GM10248 (cell line): ENCODE measurements at regions of chr6 and their contacts with region 1.

Region 1: DNA sequence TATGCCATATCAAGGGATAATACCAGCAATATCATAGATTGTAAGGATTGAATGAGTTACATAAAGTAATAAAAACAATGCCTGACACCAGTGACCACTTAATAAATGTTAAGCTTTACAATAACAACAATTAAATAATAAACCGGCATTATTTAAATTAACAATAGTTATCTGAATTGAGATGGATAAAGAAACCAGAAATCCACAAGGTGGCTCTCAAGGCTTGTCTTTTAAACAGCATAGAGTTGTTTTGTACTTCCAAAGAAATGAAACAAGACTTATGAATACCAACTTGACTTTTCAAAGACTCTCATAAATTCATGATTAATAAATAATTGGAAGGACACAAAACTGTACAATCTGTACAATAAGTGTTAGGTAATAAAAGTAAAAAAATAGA is 203.1 kb downstream of the ASCC3 start:
- DNase-seq: no peak
- CTCF ChIP-seq: no peak

Region 2: GRCh38 chr6:100664274-100665040 is 13.6 kb before region 1 on chr6:
- CTCF ChIA-PET with region 1: interaction called, 28 read pairs
- POLR2A ChIA-PET with region 1: no interaction called
- DNase-seq: no peak
- CTCF ChIP-seq: peak; percentile 52